ENCODE measurements at regions of chr19 and their contacts with region 1.

Region 1: GRCh38 chr19:12983542-12984142 is 11.6 kb upstream of the NFIX start:
- DNase-seq: peak; percentile 84
- H3K4me3 ChIP-seq: no peak overlapping the region
- H3K27ac ChIP-seq: no peak overlapping the region
- H3K4me1 ChIP-seq: peaks cover 7% of the 10 kb centered on the region
- H3K27me3 ChIP-seq: no peaks in the 10 kb centered on the region
- CTCF ChIP-seq: peak; percentile 84

Region 2: DNA sequence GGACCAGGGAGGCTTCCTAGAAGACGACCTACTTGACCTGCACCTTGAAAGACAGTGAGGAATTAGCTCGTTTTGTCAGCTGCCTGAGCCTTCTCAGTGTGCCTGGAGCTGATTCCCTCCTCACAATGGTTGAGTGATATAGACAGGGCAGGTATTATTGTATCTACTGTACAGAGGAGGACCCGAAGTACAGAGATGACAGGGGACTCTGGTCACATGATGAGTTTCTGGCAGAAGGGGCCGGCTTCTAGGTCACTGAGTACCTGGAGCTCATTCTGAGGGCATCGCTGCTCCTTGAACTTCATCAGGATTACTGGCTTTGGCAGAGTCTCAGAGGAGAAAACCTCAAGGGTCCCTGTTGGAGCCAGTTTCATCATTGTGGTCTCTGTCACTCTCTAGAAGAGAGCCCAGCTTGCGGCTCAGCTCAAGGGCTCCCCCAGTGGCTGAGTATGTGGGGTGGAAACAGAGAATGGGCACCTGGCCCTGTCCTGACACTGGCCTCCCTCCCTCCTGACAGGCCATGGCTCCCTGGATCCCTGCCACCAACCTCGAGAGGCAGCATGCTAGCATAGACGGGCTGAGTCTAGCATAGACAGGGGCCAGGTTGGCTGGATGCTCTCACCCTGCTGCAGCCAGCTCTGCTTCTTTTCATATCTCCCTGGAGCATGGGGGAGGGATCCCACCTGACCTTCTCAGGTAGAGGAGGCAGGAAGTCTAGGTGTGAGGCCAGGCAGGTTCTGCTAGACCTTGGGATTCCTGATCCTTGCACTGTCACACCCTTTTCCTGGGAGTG is 50.4 kb after region 1 on chr19:
- intact Hi-C with region 1: loop called (anchors 5 kb)
- DNase-seq: peak; percentile 89
- H3K4me3 ChIP-seq: no peak overlapping the region
- H3K27ac ChIP-seq: peak overlapping the region; percentile 84
- H3K4me1 ChIP-seq: peaks cover 32% of the 10 kb centered on the region
- H3K27me3 ChIP-seq: no peaks in the 10 kb centered on the region
- CTCF ChIP-seq: peak; percentile 80

Region 3: DNA sequence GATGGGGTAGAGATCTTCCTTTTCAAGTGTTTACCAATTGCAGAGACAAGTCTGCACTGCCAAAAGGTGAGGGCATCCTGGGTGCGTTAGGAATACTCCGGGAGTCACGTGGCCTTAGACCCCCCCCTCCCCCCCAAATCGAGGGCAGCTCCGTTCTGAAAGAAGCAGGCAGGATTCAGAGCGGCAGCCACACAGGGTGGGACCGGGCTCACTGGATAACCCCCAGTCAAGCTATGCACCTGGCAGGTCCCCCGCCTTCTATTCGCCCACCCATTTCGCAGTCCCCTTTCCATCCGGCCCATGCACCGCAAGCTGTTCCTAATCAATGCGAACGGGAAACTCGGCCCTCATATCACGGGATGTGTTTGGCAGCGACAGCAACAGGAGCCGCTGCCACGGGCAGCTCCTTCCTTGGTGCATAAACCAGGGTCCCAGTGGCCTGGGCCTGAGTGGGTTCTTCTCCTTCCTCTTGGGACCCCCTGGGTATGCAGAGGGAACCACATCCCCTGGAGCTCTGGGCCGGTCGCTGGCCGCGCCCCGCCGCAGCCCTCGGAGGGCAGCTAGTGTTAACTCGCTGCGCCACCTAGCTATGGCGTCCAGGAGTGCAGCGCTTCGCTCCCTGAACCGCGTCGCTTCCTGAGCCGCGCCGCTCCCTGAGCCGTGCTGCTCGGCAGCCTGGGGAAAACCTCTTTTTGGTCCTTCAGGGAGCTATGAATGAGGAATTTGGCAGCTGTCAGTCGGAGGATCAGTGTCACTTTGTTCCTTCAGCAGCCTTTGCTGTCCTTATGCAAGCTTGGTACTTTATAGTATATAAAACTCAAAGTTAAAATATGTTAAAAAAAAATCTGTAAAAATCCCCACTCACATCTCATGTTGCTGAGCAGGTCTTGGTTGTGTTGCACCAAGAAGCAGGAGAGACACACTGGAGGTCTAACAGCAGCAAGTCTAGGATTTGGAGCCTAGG is 77.6 kb after region 1 on chr19:
- intact Hi-C with region 1: loop called (anchors 2 kb)
- DNase-seq: peak; percentile 92
- H3K4me3 ChIP-seq: peak overlapping the region; percentile 47
- H3K27ac ChIP-seq: peak overlapping the region; percentile 42
- H3K4me1 ChIP-seq: peaks cover 17% of the 10 kb centered on the region
- H3K27me3 ChIP-seq: no peaks in the 10 kb centered on the region
- CTCF ChIP-seq: peak; percentile 98

Region 4: DNA sequence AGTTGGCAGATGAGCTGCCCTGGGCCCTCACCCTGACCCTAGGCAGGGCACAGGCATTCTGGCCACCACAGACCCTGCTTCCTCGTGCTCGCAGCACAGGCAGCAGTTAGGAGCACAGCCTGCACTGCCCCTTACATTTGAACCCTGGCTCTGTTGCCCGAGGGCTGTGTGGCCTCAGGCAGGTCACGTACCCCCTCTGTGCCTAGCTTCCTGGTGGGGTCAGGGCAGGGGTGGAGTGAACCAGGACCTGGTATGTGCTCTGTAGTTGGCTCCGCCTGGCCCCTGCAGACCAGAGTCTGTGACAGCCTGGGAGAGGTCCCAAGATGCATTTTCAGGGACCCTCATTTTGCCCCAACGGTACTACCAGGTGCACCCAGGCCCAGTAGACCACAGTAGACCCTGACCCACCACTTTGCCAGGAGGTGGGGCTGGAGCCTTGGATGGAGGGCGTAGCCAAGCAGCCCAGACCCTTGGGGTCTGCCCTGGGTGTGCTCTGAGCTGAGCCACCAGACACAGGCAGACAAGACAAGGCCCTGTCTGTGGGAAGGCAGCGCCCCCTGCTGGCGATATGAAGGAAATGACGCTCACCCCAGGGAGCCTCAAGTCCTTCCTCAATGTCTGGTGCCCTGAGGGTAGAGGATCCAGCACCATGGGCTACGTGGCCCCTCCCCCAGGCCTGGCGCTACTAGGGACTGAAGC is 109.9 kb after region 1 on chr19:
- intact Hi-C with region 1: loop called (anchors 2 kb)
- DNase-seq: peak; percentile 86
- H3K4me3 ChIP-seq: no peak overlapping the region
- H3K27ac ChIP-seq: no peak overlapping the region
- H3K4me1 ChIP-seq: peaks cover 10% of the 10 kb centered on the region
- H3K27me3 ChIP-seq: no peaks in the 10 kb centered on the region
- CTCF ChIP-seq: peak; percentile 92

Region 5: GRCh38 chr19:13132471-13133180 is 149.0 kb after region 1 on chr19:
- intact Hi-C with region 1: no loop called
- DNase-seq: no peak
- H3K4me3 ChIP-seq: no peak overlapping the region
- H3K27ac ChIP-seq: no peak overlapping the region
- H3K4me1 ChIP-seq: no peaks in the 10 kb centered on the region
- H3K27me3 ChIP-seq: no peaks in the 10 kb centered on the region
- CTCF ChIP-seq: no peak